A549 (cell line): ENCODE measurements at regions of chr3 and their contacts with region 1.

Region 1: DNA sequence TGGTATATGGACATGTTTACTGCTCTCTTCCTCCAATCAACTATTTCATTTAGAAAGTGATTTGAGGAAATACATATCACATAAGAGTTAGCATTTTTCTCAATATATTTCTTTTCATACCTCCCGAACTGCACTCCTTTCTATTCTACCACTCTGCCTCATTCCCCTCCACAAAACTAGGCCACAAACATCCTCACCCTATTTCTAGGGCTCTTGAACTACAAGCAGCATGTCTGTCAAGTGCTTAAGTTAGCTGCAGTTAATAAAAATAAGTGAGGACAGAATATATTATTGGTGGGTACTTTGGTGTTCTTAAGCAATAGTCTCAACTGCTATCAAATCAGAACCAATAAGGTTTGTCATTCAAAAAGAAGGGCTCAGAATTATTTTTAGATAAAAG is 125.1 kb downstream of the CLASP2 start:
- DNase-seq: no peak
- ATAC-seq: no peak
- H3K4me3 ChIP-seq: no peak overlapping the region
- H3K27ac ChIP-seq: no peak overlapping the region
- H3K4me1 ChIP-seq: no peaks in the 10 kb centered on the region
- CTCF ChIP-seq: no peak
- EP300 ChIP-seq: no peak
- POLR2A ChIP-seq: no peak
- RAD21 ChIP-seq: no peak

Region 2: DNA sequence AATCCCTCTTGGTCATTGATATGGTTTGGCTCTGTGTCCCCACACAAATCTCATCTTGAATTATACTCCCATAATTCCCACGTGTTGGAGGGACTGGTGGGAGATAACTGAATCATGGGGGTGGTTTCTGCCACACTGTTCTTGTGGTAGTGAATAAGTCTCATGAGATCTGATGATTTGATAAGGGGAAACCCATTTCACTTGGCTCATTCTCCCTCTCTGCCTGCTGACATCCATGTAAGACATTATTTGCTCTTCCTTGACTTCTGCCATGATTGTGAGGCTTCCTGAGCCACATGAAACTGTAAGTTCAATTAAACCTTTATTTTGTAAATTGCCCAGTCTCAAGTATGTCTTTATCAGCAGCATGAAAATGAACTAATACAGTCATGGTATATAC is 45.9 kb before region 1 on chr3:
- CTCF ChIA-PET with region 1: no interaction called
- POLR2A ChIA-PET with region 1: interaction called, 12 read pairs
- DNase-seq: no peak
- ATAC-seq: no peak
- H3K4me3 ChIP-seq: no peak overlapping the region
- H3K27ac ChIP-seq: no peak overlapping the region
- H3K4me1 ChIP-seq: no peaks in the 10 kb centered on the region
- CTCF ChIP-seq: no peak
- EP300 ChIP-seq: no peak
- POLR2A ChIP-seq: no peak
- RAD21 ChIP-seq: no peak

Region 3: GRCh38 chr3:33855884-33856546 is 263.0 kb after region 1 on chr3:
- CTCF ChIA-PET with region 1: no interaction called
- POLR2A ChIA-PET with region 1: no interaction called
- DNase-seq: no peak
- ATAC-seq: peak in 1 of 2 experiments; percentile 44; a peak in 2 of 6 replicates
- H3K4me3 ChIP-seq: no peak overlapping the region
- H3K27ac ChIP-seq: peak overlapping the region in 1 of 2 experiments; percentile 22; a peak in 1 of 6 replicates
- H3K4me1 ChIP-seq: 0 out of 3 replicates have a peak, but pooled peaks cover 12% of the 10 kb centered on the region
- CTCF ChIP-seq: no peak
- EP300 ChIP-seq: no peak
- POLR2A ChIP-seq: no peak
- RAD21 ChIP-seq: no peak